IMR-90 (cell line): ENCODE measurements at regions of chr1 and their contacts with region 1.

Region 1: GRCh38 chr1:66764994-66765578 is 12.8 kb downstream of the DYNLT5 start:
- DNase-seq: peak; percentile 66
- ATAC-seq: peak; percentile 93
- H3K4me3 ChIP-seq: no peak overlapping the region
- H3K27ac ChIP-seq: no peak overlapping the region
- H3K4me1 ChIP-seq: no peaks in the 10 kb centered on the region
- H3K27me3 ChIP-seq: no peaks in the 10 kb centered on the region; the same call in 1 of the 2 replicates
- CTCF ChIP-seq: peak; percentile 83
- POLR2A ChIP-seq: no peak
- RAD21 ChIP-seq: peak; percentile 82

Region 2: GRCh38 chr1:66598670-66599069 is 166.4 kb before region 1 on chr1:
- CTCF ChIA-PET with region 1: no interaction called
- POLR2A ChIA-PET with region 1: no interaction called
- dilution Hi-C with region 1: no loop called
- in situ Hi-C with region 1: no loop called
- intact Hi-C with region 1: no loop called
- DNase-seq: peak; percentile 88
- ATAC-seq: peak; percentile 85
- H3K4me3 ChIP-seq: no peak overlapping the region
- H3K27ac ChIP-seq: peak overlapping the region; percentile 88
- H3K4me1 ChIP-seq: peaks cover 10% of the 10 kb centered on the region
- H3K27me3 ChIP-seq: no peaks in the 10 kb centered on the region
- CTCF ChIP-seq: no peak
- POLR2A ChIP-seq: no peak
- RAD21 ChIP-seq: no peak

Region 3: DNA sequence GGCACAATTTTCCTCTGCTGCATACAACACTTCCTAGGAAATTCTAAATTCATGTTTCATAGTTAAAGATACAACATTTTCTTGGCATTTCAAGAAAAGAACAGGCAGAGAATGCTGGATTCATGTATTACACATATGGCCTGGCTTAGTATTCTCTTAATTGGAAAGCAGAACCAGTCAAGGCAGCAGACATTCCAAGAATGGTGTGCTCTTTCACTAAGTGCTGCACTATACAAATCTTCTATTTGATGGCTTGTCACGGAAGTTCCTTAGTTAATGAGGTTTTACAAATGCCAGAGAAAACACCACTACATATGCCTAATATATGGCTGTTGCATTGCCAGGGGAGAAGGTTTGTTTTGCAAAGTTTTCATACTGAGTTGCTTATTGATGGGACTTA is 93.6 kb before region 1 on chr1:
- CTCF ChIA-PET with region 1: no interaction called
- POLR2A ChIA-PET with region 1: no interaction called
- dilution Hi-C with region 1: no loop called
- in situ Hi-C with region 1: no loop called
- intact Hi-C with region 1: no loop called
- DNase-seq: no peak
- ATAC-seq: no peak
- H3K4me3 ChIP-seq: no peak overlapping the region
- H3K27ac ChIP-seq: no peak overlapping the region
- H3K4me1 ChIP-seq: no peaks in the 10 kb centered on the region
- H3K27me3 ChIP-seq: no peaks in the 10 kb centered on the region
- CTCF ChIP-seq: no peak
- POLR2A ChIP-seq: no peak
- RAD21 ChIP-seq: no peak

Region 4: GRCh38 chr1:66840929-66841328 is 75.8 kb after region 1 on chr1:
- CTCF ChIA-PET with region 1: no interaction called
- POLR2A ChIA-PET with region 1: no interaction called
- dilution Hi-C with region 1: no loop called
- in situ Hi-C with region 1: no loop called
- intact Hi-C with region 1: no loop called
- DNase-seq: no peak
- ATAC-seq: no peak
- H3K4me3 ChIP-seq: no peak overlapping the region
- H3K27ac ChIP-seq: no peak overlapping the region
- H3K4me1 ChIP-seq: no peaks in the 10 kb centered on the region
- H3K27me3 ChIP-seq: no peaks in the 10 kb centered on the region
- CTCF ChIP-seq: no peak
- POLR2A ChIP-seq: no peak
- RAD21 ChIP-seq: no peak

Region 5: GRCh38 chr1:66890621-66891020 is 125.5 kb after region 1 on chr1:
- CTCF ChIA-PET with region 1: no interaction called
- POLR2A ChIA-PET with region 1: no interaction called
- dilution Hi-C with region 1: no loop called
- in situ Hi-C with region 1: no loop called
- intact Hi-C with region 1: no loop called
- DNase-seq: no peak
- ATAC-seq: no peak
- H3K4me3 ChIP-seq: no peak overlapping the region
- H3K27ac ChIP-seq: no peak overlapping the region
- H3K4me1 ChIP-seq: no peaks in the 10 kb centered on the region
- H3K27me3 ChIP-seq: no peaks in the 10 kb centered on the region
- CTCF ChIP-seq: no peak
- POLR2A ChIP-seq: no peak
- RAD21 ChIP-seq: no peak

Region 6: DNA sequence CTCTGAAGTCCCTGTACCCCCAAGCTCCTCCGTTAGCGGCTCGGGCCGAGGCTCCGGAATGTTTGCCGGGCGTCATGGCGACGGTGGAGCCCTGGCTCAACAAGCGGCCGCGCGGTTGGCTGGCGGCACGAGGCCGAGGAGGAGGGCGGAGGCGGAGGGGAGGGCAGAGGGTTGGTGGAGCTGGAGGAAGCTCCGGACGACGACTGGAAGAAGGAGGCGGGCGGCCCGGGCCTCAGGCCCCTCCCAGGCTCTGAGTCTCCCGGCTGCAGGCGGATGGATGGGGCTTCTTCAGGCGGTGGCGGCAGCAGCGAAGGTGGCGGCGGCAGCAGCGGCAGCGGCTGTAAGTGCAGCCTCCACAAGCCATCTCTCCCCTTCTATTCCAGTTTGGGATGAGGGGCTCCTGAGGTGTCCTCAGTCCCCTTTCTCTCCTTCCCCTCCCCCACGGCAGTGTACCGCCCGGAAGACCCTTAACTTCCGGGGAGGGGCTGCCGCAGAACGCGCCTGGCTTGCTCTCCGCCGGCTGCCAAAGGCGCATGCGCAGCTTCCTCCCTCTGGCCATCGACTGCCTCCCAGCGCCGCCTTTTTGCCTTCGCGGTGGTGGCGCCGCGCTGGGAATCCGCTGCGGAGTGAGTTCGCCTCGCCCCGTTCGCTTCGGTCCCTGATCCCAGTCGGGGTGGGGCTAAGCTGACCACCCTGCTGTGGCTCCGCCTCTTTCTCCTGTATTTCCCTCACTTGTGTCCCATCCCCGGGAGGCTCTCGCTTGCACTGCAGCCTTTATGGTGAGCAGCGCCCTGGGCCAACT is 159.9 kb after region 1 on chr1 and contains the starts of genes DNAI4 and MIER1:
- CTCF ChIA-PET with region 1: no interaction called
- POLR2A ChIA-PET with region 1: no interaction called
- dilution Hi-C with region 1: no loop called
- in situ Hi-C with region 1: no loop called
- intact Hi-C with region 1: loop called (anchors 5 kb)
- DNase-seq: peak; percentile 98
- ATAC-seq: peak; percentile 96
- H3K4me3 ChIP-seq: peak within 1 kb of the TSS; percentile 64
- H3K27ac ChIP-seq: peak within 1 kb of the TSS; percentile 92
- H3K4me1 ChIP-seq: no peaks in the 10 kb centered on the region
- H3K27me3 ChIP-seq: no peaks in the 10 kb centered on the region
- CTCF ChIP-seq: peak; percentile 5; the same call in 1 of the 2 replicates
- POLR2A ChIP-seq: peak; percentile 63
- RAD21 ChIP-seq: no peak
- total RNA-seq, gene DNAI4: 1.6 and 1.7 TPM in 2 replicates
- total RNA-seq, gene MIER1: 11.5 and 32.2 TPM in 2 replicates

Region 7: DNA sequence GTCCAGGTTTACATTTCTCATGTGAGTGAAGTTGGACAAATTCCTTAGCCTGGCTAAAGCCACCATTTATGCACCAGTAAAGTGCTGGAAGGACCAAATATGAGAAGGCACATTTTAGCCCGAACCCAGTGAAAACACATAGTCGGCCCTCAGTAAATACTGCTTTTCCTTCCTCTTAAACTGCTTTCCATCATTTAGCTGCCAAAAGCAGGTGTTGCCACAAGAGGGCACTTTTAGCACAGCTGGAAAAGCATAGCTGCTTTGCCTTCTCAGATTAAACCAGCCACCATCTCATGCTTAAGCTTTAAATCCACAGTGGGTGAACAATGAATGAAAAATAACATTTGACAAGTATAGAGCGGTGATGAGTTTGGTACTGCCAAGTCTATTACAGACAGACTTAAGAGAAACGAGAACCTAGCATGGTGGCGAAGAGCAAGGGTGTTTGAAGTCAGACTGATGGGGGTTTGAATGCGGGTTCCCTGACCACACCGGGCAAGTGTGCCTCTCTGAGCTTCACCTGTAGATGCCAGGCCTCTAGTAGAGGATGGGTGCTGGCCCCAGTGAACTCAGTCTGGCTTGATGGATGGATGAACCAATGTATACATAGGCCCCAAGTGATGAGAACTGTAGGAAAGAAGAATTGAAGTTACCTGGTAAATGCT is 231.1 kb after region 1 on chr1:
- CTCF ChIA-PET with region 1: interaction called, 4 read pairs
- POLR2A ChIA-PET with region 1: no interaction called
- dilution Hi-C with region 1: no loop called
- in situ Hi-C with region 1: no loop called
- intact Hi-C with region 1: loop called (anchors 5 kb)
- DNase-seq: peak; percentile 77
- ATAC-seq: peak; percentile 84
- H3K4me3 ChIP-seq: no peak overlapping the region
- H3K27ac ChIP-seq: no peak overlapping the region
- H3K4me1 ChIP-seq: no peaks in the 10 kb centered on the region
- H3K27me3 ChIP-seq: no peaks in the 10 kb centered on the region
- CTCF ChIP-seq: peak; percentile 90
- POLR2A ChIP-seq: no peak
- RAD21 ChIP-seq: peak; percentile 97

Region 8: DNA sequence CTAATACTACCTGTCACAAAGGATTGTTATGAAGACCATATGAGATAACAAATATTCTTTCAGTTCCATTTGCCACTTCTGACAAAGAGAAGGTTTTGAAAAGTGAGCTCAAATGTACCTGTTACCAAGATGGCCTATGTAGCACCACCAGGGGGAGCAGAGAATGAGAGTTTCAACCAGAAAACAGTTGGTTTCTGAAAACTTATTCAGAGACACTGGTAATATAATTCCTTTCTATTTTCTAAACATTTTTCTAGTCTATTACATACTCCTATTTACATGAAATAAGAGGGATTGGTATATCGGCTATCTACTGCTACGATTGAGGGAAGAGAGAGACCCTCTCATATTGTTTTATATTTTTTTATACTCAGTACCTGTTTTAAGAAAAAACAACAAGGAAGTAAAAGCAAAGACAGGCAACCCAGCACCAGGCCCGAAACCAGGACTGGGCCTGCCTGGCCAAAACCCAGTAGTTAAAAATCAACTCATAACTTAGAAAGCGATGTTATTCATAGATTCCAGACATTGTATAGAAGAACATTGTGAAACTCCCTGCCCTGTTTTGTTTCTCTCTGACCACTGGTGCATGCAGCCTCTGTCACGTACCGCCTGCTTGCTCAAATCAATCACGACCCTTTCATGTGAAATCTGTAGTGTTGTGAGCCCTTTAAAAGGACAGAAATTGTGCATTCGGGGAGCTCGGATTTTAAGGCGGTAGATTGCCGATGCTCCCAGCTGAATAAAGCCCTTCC is 449.5 kb after region 1 on chr1:
- CTCF ChIA-PET with region 1: interaction called, 3 read pairs
- POLR2A ChIA-PET with region 1: no interaction called
- dilution Hi-C with region 1: no loop called
- in situ Hi-C with region 1: no loop called
- intact Hi-C with region 1: loop called (anchors 1 kb)
- DNase-seq: peak; percentile 29
- ATAC-seq: peak; percentile 62
- H3K4me3 ChIP-seq: no peak overlapping the region
- H3K27ac ChIP-seq: no peak overlapping the region
- H3K4me1 ChIP-seq: no peaks in the 10 kb centered on the region
- H3K27me3 ChIP-seq: no peaks in the 10 kb centered on the region
- CTCF ChIP-seq: peak; percentile 55
- POLR2A ChIP-seq: no peak
- RAD21 ChIP-seq: peak; percentile 36

Region 9: GRCh38 chr1:67500413-67500959 is 735.4 kb after region 1 on chr1:
- CTCF ChIA-PET with region 1: no interaction called
- POLR2A ChIA-PET with region 1: no interaction called
- dilution Hi-C with region 1: no loop called
- in situ Hi-C with region 1: loop called (anchors 25 kb)
- intact Hi-C with region 1: loop called (anchors 5 kb)
- DNase-seq: peak; percentile 74
- ATAC-seq: peak; percentile 100
- H3K4me3 ChIP-seq: no peak overlapping the region
- H3K27ac ChIP-seq: no peak overlapping the region
- H3K4me1 ChIP-seq: no peaks in the 10 kb centered on the region
- H3K27me3 ChIP-seq: peaks cover 14% of the 10 kb centered on the region
- CTCF ChIP-seq: peak; percentile 99
- POLR2A ChIP-seq: peak; percentile 46; the same call in 1 of the 2 replicates
- RAD21 ChIP-seq: peak; percentile 100